ENCODE measurements at regions of chr10 and their contacts with region 1.

Region 1: GRCh38 chr10:86899670-86900276 is 57.6 kb downstream of the MMRN2 start:
- DNase-seq: peak in 1 of 2 donors; percentile 31
- ATAC-seq: peak; percentile 69 to 84 (median 72)
- H3K4me3 ChIP-seq: no peak overlapping the region
- H3K27ac ChIP-seq: no peak overlapping the region
- H3K4me1 ChIP-seq: peaks cover 21% of the 10 kb centered on the region
- H3K27me3 ChIP-seq: no peaks in the 10 kb centered on the region
- CTCF ChIP-seq: peak; percentile 77

Region 2: GRCh38 chr10:86693721-86694369 is 205.9 kb before region 1 on chr10:
- intact Hi-C with region 1: loop called (anchors 5 kb)
- DNase-seq: no peak
- ATAC-seq: no peak
- H3K4me3 ChIP-seq: no peak overlapping the region
- H3K27ac ChIP-seq: peak overlapping the region; percentile 63
- H3K4me1 ChIP-seq: peaks cover 33% of the 10 kb centered on the region
- H3K27me3 ChIP-seq: no peaks in the 10 kb centered on the region
- CTCF ChIP-seq: peak; percentile 41

Region 3: GRCh38 chr10:86868353-86868752 is 31.4 kb before region 1 on chr10:
- intact Hi-C with region 1: no loop called
- DNase-seq: no peak
- ATAC-seq: no peak
- H3K4me3 ChIP-seq: no peak overlapping the region
- H3K27ac ChIP-seq: no peak overlapping the region
- H3K4me1 ChIP-seq: peaks cover 34% of the 10 kb centered on the region
- H3K27me3 ChIP-seq: no peaks in the 10 kb centered on the region
- CTCF ChIP-seq: no peak

Region 4: GRCh38 chr10:86878983-86879713 is 20.6 kb before region 1 on chr10:
- intact Hi-C with region 1: no loop called
- DNase-seq: no peak
- ATAC-seq: no peak
- H3K4me3 ChIP-seq: no peak overlapping the region
- H3K27ac ChIP-seq: no peak overlapping the region
- H3K4me1 ChIP-seq: no peaks in the 10 kb centered on the region
- H3K27me3 ChIP-seq: no peaks in the 10 kb centered on the region
- CTCF ChIP-seq: no peak